ENCODE measurements at regions of chr11 and their contacts with region 1.

Region 1: GRCh38 chr11:78809931-78810541 is 235.4 kb upstream of the NARS2 start:
- DNase-seq: no peak

Region 2: DNA sequence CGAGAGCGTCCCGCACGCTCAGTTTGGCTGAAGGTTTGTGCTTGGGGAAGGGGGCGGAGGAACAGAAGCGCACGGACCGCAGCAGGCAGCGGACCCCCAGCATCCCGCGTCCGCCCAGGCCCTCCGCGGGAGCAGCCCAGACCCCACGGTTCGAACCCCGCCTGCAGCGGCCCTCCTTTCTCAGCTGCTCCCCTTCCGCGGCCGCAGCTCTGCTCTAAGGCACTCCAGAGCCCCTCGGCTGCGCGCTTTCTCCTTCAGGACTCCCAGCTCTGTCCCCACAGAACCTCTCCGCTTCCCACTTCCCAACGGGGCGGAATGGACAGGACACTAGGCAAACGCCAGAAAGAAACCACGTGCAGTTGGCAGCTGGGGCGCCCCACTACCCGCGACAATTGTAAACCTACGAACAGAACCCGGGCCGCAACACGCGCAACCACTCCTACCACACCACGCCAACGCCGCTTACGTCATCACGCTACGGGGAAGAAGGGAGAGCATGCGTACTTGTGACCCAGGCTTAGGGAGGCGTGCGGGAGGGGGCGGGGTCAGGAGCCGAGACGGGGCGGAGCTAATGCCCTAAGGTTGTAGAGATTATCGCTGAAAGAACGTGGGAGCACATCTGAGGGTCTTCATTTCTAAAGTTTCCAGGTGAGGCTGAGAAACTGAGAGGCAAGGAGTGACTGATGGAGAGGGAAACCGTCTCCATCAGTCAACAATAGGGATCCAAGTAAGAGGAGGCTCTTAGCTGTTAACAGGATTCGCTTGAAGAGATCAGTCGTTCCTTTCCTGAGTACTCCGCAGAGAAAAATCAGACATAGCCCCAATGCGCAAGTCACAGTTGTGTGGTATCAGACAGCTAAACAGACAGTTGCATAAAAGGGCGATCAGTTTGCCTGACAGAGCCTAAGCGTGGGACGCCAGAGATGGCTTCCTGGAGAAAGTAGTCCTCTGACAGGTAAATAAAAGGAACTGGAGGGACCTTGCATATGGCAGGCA is 235.4 kb before region 1 on chr11 and contains the start of gene NARS2:
- CTCF ChIA-PET with region 1: no interaction called
- POLR2A ChIA-PET with region 1: no interaction called
- DNase-seq: peak; percentile 97

Region 3: GRCh38 chr11:78798660-78799059 is 11.4 kb before region 1 on chr11:
- CTCF ChIA-PET with region 1: interaction called, 22 read pairs
- POLR2A ChIA-PET with region 1: interaction called, 3 read pairs
- DNase-seq: peak; percentile 75

Region 4: DNA sequence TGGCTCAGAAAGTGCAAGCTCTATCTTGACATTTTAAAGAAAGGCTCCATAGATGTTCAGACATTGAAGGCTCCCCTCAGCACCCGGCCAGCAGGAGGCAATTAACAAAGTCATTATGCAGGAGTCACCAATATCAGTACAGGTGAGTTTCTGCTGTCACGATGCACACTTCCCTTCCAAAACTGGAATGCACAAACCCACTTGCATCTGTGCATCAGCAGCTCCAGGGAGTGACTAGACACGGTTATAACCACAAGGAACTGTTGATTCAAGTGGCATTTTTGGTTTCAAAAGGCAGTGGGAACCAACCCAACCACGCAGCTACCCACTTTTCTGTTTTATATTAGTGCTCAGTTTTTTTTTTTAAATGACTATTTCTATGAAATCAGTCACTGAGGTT is 58.5 kb after region 1 on chr11:
- CTCF ChIA-PET with region 1: no interaction called
- POLR2A ChIA-PET with region 1: no interaction called
- DNase-seq: no peak